ENCODE measurements at regions of chr4 and their contacts with region 1.

Region 1: DNA sequence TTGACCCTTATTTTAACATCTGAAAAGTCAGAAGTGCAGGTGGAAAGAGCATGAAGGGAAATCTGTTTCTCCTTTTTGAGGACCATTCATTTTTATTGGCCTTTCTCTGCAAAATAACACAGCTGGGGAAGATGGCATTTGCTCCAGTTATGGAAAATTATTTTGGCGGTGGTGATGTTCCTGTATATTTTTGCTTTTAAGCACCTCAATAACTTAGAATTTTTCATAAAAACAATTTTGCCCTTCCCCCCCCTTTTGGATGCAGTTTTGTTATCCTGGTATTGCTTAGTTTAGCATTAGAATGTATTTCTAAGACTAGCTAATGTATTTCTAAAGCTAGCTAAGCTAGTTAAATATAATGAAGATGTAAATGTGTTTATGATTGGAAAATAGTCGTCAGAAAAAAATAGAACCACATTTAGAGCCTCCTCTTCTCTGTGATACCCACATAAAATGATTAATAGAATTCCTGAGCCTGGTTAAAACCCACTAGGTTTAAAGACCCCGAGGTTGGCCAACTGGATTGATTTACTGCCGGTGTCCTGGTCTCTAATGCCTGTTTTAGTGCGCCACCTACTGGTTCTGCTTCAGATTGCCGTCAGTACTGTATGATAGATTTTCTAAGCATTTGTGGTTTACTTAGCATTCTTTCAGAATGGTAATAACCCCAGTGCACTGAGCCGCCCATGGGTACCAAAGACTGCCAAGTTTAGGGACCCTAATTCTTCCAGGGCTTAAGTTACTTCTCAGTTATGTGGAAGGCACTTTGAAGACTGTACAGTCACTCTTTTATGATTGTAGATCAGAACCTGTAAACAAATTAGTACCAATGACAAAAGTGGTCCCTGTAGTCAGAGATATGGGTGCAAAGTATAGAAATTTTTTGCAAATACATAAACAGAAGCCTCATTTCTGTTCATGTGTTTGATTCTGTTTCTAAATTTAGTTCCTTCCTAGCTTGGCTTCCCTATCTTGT is 11.4 kb downstream of the KLF3 start:
- DNase-seq: no peak
- ATAC-seq: peak; percentile 81
- H3K4me3 ChIP-seq: no peak overlapping the region
- H3K27ac ChIP-seq: no peak overlapping the region
- H3K4me1 ChIP-seq: peaks cover 47% of the 10 kb centered on the region
- H3K27me3 ChIP-seq: no peaks in the 10 kb centered on the region; a peak in 1 of 4 replicates
- CTCF ChIP-seq: peak; percentile 80 to 96 (median 89)
- EP300 ChIP-seq: peak in 1 of 2 experiments; percentile 36; a peak in 1 of 4 replicates
- POLR2A ChIP-seq: no peak
- RAD21 ChIP-seq: peak; percentile 100

Region 2: DNA sequence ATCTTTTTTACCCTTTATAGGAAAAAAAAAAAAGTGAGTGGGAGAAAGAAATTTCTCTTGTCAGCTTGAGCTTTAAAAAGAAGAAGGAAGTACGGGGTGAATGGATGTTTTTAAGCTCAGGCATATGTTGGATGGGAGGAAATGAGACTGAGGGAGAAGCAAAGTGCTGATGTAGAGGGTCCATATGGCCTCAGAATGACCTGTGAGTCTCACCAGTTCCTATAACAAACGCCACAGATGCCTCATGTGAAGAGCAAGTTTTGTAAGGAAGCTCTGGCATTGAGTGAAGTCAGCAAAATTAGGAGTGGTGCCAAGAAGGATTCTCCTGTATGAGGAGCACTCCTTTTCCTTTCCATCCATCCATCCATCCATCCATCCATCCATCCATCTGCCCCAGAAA is 500.6 kb before region 1 on chr4:
- CTCF ChIA-PET with region 1: interaction called, 225 read pairs
- POLR2A ChIA-PET with region 1: interaction called, 20 read pairs
- RAD21 ChIA-PET with region 1: interaction called, 208 read pairs
- SMC1A ChIA-PET with region 1: interaction called, 268 read pairs
- in situ Hi-C with region 1: no loop called
- intact Hi-C with region 1: loop called (anchors 1 kb)
- DNase-seq: no peak
- ATAC-seq: no peak
- H3K4me3 ChIP-seq: no peak overlapping the region
- H3K27ac ChIP-seq: no peak overlapping the region
- H3K4me1 ChIP-seq: peaks cover 36% of the 10 kb centered on the region
- H3K27me3 ChIP-seq: no peaks in the 10 kb centered on the region
- CTCF ChIP-seq: no peak
- EP300 ChIP-seq: no peak
- POLR2A ChIP-seq: no peak
- RAD21 ChIP-seq: no peak

Region 3: DNA sequence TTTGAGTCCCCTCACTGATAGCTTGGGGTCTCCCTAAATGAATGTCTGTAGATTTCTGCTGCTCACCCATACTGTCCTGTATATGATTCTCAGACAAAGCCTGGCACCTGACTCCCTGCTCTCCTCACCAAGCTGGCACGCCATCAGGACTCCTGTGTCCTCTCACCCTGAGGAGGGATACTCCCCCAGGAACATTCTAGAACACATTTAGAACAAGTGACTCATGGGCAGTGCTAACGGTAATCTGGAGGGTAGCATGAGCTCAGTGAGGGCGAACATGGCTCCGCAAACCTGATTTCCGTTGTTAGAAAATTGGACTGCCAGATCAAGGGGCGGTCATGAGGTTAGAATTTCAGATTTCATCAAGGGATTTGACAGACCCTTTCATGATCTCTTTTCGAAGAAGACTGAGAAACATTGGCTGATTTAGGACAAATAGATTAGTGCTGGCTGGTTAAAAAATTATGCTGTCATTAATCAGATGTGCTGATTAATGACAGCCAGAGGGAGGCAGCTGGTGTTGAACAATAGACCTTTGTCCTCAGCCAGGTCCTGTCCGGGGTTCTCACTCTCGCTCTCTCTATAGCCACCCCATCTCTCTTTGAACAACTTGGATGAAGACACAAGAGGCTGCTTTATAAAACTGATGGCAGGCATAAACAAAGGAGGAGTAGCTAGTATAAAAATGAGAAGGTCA is 470.9 kb before region 1 on chr4:
- CTCF ChIA-PET with region 1: interaction called, 25 read pairs
- POLR2A ChIA-PET with region 1: interaction called, 4 read pairs
- RAD21 ChIA-PET with region 1: interaction called, 10 read pairs
- SMC1A ChIA-PET with region 1: no interaction called
- in situ Hi-C with region 1: no loop called
- intact Hi-C with region 1: no loop called
- DNase-seq: no peak
- ATAC-seq: no peak
- H3K4me3 ChIP-seq: no peak overlapping the region
- H3K27ac ChIP-seq: no peak overlapping the region
- H3K4me1 ChIP-seq: no peaks in the 10 kb centered on the region
- H3K27me3 ChIP-seq: no peaks in the 10 kb centered on the region
- CTCF ChIP-seq: no peak
- EP300 ChIP-seq: no peak
- POLR2A ChIP-seq: no peak
- RAD21 ChIP-seq: no peak

Region 4: DNA sequence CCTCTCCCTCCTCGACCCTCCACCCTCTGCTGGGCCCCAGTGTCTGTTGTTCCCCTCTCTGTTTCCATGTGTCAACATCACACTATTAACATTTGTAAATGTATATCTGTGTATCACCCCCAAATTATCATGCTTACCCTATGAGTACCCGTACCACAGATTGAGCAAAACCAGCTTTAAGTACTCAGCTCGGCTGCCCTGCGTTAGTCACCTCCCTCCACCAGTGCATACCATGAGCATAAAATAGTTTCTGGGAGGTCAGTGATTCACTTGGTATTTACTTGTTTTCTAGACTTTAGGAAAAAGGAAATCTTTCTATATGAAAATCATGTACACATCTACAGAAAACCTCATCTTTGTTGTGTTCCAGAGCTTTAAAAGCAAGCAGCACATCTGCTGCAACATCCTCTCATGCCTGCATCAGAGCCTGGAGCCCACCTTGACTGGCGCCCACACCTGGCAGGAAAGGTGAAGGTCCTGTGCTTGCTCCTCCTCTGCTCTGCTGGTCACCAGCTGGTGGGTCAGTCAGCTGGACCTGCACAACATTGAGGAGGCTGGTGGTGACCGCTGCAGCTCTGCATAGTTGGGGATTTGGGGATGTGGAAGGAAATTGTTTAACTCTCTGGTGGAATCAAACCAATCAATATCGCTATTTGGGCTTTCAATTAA is 225.8 kb before region 1 on chr4:
- CTCF ChIA-PET with region 1: interaction called, 3 read pairs
- POLR2A ChIA-PET with region 1: no interaction called
- RAD21 ChIA-PET with region 1: no interaction called
- SMC1A ChIA-PET with region 1: interaction called, 6 read pairs
- in situ Hi-C with region 1: no loop called
- intact Hi-C with region 1: loop called (anchors 10 kb)
- DNase-seq: no peak
- ATAC-seq: no peak
- H3K4me3 ChIP-seq: no peak overlapping the region
- H3K27ac ChIP-seq: no peak overlapping the region
- H3K4me1 ChIP-seq: peaks cover 27% of the 10 kb centered on the region
- H3K27me3 ChIP-seq: no peaks in the 10 kb centered on the region
- CTCF ChIP-seq: no peak
- EP300 ChIP-seq: no peak
- POLR2A ChIP-seq: no peak
- RAD21 ChIP-seq: no peak

Region 5: GRCh38 chr4:38687571-38688011 is 12.2 kb after region 1 on chr4:
- CTCF ChIA-PET with region 1: interaction called, 19 read pairs
- POLR2A ChIA-PET with region 1: no interaction called
- RAD21 ChIA-PET with region 1: interaction called, 6 read pairs
- SMC1A ChIA-PET with region 1: interaction called, 5 read pairs
- in situ Hi-C with region 1: no loop called
- intact Hi-C with region 1: no loop called
- DNase-seq: no peak
- ATAC-seq: no peak
- H3K4me3 ChIP-seq: no peak overlapping the region
- H3K27ac ChIP-seq: no peak overlapping the region
- H3K4me1 ChIP-seq: no peaks in the 10 kb centered on the region
- H3K27me3 ChIP-seq: no peaks in the 10 kb centered on the region; a peak in 1 of 4 replicates
- CTCF ChIP-seq: no peak
- EP300 ChIP-seq: no peak
- POLR2A ChIP-seq: no peak
- RAD21 ChIP-seq: no peak

Region 6: DNA sequence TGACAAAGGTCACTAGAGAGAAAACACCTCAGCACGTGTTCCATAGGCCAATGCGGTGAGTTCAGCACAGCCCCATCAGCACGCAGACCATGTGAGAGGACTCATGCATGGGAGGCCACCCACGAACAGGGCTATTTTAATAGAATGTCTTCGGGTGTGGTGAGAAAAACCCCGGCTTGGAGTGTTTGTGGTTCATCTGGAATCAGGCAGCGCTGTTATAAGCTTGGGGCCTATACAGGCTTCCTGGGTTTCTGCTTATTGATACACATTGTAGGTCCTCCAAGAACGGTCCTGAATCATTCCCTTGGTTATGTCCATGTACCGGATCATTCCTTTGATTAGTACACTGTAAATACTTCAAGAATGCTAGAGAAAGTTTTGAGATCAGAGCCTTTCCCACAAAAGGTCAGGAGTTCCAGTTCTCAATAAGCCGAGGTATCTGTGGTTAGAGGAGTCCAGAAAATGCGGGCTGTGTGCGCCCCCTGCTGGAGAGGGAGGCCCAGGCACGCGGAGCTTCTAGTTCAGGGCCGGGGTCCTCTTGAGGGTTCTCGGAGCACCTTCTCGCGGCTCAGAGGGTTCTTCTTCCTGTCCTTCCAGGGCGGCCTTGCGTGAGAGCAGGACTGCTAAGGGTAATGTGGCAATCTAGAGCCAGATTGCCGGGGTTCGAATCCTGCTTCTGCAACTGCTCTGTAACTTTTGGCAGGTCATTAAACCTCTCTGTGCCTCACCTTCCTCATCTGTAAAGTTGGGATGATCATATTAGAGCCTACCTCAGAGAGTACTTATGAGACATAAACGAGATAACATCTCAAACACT is 55.6 kb after region 1 on chr4:
- CTCF ChIA-PET with region 1: interaction called, 22 read pairs
- POLR2A ChIA-PET with region 1: no interaction called
- RAD21 ChIA-PET with region 1: interaction called, 12 read pairs
- SMC1A ChIA-PET with region 1: interaction called, 40 read pairs
- in situ Hi-C with region 1: no loop called
- intact Hi-C with region 1: loop called (anchors 1 kb)
- DNase-seq: peak; percentile 87
- ATAC-seq: peak; percentile 97
- H3K4me3 ChIP-seq: no peak overlapping the region
- H3K27ac ChIP-seq: peak overlapping the region; percentile 57
- H3K4me1 ChIP-seq: peaks cover 16% of the 10 kb centered on the region
- H3K27me3 ChIP-seq: no peaks in the 10 kb centered on the region; a peak in 1 of 4 replicates
- CTCF ChIP-seq: peak; percentile 69 to 96 (median 89)
- EP300 ChIP-seq: peak; percentile 75 to 91; a peak in 3 of 4 replicates
- POLR2A ChIP-seq: no peak
- RAD21 ChIP-seq: peak; percentile 97

Region 7: GRCh38 chr4:38967260-38968095 is 292.0 kb after region 1 on chr4:
- CTCF ChIA-PET with region 1: no interaction called
- POLR2A ChIA-PET with region 1: no interaction called
- RAD21 ChIA-PET with region 1: no interaction called
- SMC1A ChIA-PET with region 1: no interaction called
- in situ Hi-C with region 1: no loop called
- intact Hi-C with region 1: no loop called
- DNase-seq: no peak
- ATAC-seq: no peak
- H3K4me3 ChIP-seq: no peak overlapping the region
- H3K27ac ChIP-seq: no peak overlapping the region
- H3K4me1 ChIP-seq: no peaks in the 10 kb centered on the region
- H3K27me3 ChIP-seq: no peaks in the 10 kb centered on the region
- CTCF ChIP-seq: no peak
- EP300 ChIP-seq: no peak
- POLR2A ChIP-seq: no peak
- RAD21 ChIP-seq: no peak

Region 8: DNA sequence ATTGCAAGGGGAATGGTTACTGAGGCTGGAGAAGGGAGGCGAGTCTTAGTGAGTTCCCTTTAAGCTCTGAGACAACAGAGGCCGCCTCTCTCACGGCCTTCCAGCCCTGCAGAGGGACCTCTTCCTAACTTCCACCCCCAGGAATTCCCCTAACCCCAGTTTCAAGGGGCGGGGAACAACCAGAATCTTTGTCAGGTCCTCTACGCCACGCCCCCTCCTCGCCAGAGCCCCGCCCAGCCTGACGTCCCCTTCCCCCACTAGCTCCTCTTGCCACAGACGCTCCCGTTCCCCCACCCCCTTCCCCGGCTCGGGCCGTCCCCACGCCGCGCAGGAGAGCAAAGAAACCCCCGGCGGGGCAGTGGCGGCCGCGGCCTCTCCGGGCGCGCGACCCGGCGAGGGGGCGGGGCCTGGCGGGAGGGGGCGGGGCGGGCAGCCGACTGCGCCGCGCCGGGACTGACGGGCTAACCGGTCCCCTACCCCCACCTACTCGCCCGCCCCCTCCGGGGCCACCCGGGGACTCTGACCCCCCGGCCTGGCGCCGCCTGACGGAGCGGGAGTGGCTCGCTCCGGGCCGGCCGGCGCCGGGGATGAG is 369.0 kb after region 1 on chr4:
- CTCF ChIA-PET with region 1: no interaction called
- POLR2A ChIA-PET with region 1: no interaction called
- RAD21 ChIA-PET with region 1: no interaction called
- SMC1A ChIA-PET with region 1: no interaction called
- in situ Hi-C with region 1: no loop called
- intact Hi-C with region 1: no loop called
- DNase-seq: peak; percentile 90
- ATAC-seq: peak; percentile 83
- H3K4me3 ChIP-seq: peak overlapping the region; percentile 83
- H3K27ac ChIP-seq: peak overlapping the region; percentile 81
- H3K4me1 ChIP-seq: peaks cover 14% of the 10 kb centered on the region
- H3K27me3 ChIP-seq: no peaks in the 10 kb centered on the region
- CTCF ChIP-seq: peak in 1 of 3 experiments; percentile 23; a peak in 1 of 6 replicates
- EP300 ChIP-seq: peak in 1 of 2 experiments; percentile 52; a peak in 1 of 4 replicates
- POLR2A ChIP-seq: peak; percentile 74
- RAD21 ChIP-seq: no peak